ENCODE measurements at regions of chr7 and their contacts with region 1.

Region 1: DNA sequence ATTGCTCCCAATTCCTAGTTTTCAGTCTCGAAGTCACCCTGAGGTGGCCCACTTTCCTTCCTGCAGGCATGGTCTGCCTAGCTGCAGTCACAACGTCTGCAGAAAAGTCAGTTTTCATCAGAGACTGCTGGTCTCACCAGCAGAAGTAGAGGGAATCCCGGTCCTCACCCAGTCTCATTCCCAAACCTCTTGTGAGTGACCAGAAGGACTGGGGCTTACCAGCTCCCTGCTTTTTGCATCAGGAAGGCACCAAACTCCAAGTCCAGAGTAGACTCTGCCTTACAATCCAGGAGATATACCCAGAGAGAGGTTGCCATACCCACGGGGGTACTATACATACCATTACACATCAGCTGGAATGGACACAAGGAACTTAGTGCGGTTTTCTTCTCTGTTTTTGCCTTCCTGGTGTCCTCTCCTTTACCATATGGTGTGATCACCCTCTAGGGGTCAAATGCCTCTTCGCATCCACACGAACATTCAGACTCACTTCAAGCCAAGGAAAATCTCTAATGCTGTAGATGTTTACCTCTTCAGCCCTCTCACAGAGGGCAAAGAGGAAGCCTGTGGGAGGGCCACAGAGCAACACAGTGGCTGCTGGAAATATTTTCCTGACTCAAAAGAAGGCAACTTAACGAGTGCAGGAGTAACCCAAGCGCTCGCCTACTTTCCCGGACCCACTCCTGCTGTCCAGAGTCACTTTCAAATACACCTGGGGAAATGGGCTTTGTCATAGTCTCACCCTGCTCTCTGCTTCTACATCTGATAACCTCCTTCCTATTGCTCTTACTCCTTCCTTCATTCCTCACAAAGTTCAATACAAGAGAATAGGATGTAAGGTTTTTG is 220.9 kb downstream of the C7orf25 start:
- DNase-seq: peak; percentile 57
- H3K4me3 ChIP-seq: no peak overlapping the region
- H3K27ac ChIP-seq: no peak overlapping the region
- H3K4me1 ChIP-seq: no peaks in the 10 kb centered on the region
- H3K27me3 ChIP-seq: no peaks in the 10 kb centered on the region
- CTCF ChIP-seq: peak; percentile 83 to 84

Region 2: DNA sequence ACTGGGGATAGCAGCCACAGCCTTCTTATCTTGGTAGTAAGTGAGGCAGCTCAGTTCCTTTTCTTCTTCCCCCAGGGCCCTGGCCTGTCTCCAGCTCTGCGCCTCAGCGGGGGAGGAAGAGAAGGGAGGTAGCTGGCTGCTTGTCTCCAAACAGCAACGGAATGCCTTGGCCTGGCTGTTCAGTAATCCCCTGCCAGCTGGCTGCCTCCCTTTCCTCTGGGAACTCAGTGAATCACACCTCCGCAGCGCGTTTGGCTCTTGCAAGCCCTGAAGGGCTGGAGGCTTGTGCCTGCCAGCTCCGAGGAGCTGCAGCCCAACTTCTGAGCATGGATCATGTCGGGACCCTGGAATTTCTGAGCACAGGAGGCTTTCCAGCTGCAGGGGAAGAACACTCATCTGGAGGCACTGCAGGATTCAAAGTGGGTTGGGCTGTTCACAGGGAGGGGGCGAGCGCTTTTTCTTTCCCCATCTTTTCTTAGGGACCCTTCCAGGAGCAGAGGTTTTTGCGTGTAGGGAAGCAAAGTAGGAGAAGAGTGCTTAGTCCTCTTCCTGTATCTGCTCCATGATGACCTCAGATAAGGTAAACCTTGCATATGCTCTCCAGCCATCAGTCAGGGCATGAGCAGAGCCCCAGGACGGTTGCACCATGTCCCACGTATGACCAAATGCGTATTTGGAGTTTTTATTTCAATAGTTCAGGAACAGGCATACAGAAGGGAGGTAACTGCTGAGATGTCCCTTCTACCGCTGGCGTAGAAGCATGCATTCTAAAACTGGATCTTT is 734.9 kb before region 1 on chr7:
- CTCF ChIA-PET with region 1: no interaction called
- dilution Hi-C with region 1: no loop called
- in situ Hi-C with region 1: loop called in 1 of 2 experiments (anchors 5 kb)
- intact Hi-C with region 1: no loop called
- DNase-seq: peak; percentile 95
- H3K4me3 ChIP-seq: no peak overlapping the region
- H3K27ac ChIP-seq: no peak overlapping the region
- H3K4me1 ChIP-seq: peaks cover 16% of the 10 kb centered on the region
- H3K27me3 ChIP-seq: no peaks in the 10 kb centered on the region
- CTCF ChIP-seq: no peak

Region 3: DNA sequence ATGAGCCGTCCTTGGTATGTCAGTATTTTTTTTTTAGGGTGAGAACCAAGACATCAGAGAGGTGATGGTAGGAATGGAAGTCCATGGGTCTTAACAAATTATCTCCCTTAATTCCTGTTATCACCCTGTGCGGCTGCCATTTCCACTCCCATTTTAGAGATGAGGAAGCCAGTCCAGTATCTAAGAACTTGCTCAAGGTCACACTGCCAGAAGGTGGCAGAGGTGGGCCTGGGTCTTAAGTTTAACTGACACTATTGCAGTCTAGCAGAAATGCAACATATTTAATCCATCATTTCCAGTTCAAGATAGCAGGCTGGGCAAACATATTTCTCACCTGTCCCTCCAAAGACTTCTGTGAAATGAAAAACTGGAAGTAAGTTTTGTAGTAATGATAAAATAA is 562.3 kb before region 1 on chr7:
- CTCF ChIA-PET with region 1: no interaction called
- dilution Hi-C with region 1: no loop called
- in situ Hi-C with region 1: no loop called
- intact Hi-C with region 1: loop called (anchors 5 kb)
- DNase-seq: no peak
- H3K4me3 ChIP-seq: no peak overlapping the region
- H3K27ac ChIP-seq: no peak overlapping the region
- H3K4me1 ChIP-seq: peaks cover 4% of the 10 kb centered on the region
- H3K27me3 ChIP-seq: no peaks in the 10 kb centered on the region
- CTCF ChIP-seq: peak in 1 of 2 donors; percentile 42

Region 4: GRCh38 chr7:42262964-42263363 is 428.1 kb before region 1 on chr7:
- CTCF ChIA-PET with region 1: interaction called, 16 read pairs
- dilution Hi-C with region 1: no loop called
- in situ Hi-C with region 1: no loop called
- intact Hi-C with region 1: no loop called
- DNase-seq: peak; percentile 74
- H3K4me3 ChIP-seq: no peak overlapping the region
- H3K27ac ChIP-seq: peak overlapping the region; percentile 16
- H3K4me1 ChIP-seq: peaks cover 13% of the 10 kb centered on the region
- H3K27me3 ChIP-seq: no peaks in the 10 kb centered on the region
- CTCF ChIP-seq: no peak

Region 5: GRCh38 chr7:42421789-42422188 is 269.2 kb before region 1 on chr7:
- CTCF ChIA-PET with region 1: no interaction called
- dilution Hi-C with region 1: no loop called
- in situ Hi-C with region 1: no loop called
- intact Hi-C with region 1: no loop called
- DNase-seq: no peak
- H3K4me3 ChIP-seq: no peak overlapping the region
- H3K27ac ChIP-seq: no peak overlapping the region
- H3K4me1 ChIP-seq: no peaks in the 10 kb centered on the region
- H3K27me3 ChIP-seq: no peaks in the 10 kb centered on the region
- CTCF ChIP-seq: no peak

Region 6: DNA sequence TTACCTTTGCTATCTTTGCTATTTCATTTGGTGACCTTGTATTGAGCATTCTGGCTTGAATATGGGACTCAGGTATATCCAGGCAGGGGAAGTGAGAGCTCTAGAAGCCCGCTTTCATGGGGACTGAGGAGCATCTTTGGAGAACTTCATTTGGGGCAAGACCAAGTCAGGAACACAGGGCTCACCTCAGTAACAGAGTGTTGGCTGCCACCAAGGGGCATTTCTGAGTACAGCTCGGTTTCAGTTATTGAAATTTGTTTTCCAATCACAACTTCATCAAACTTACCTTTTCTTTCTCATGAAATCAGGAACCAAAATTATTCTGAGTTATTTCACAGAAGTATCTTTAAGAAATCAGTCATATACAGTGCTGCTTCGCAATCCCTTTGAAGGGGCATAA is 116.3 kb before region 1 on chr7:
- CTCF ChIA-PET with region 1: interaction called, 3 read pairs
- dilution Hi-C with region 1: no loop called
- in situ Hi-C with region 1: no loop called
- intact Hi-C with region 1: loop called (anchors 1 kb)
- DNase-seq: no peak
- H3K4me3 ChIP-seq: no peak overlapping the region
- H3K27ac ChIP-seq: no peak overlapping the region
- H3K4me1 ChIP-seq: peaks cover 3% of the 10 kb centered on the region
- H3K27me3 ChIP-seq: no peaks in the 10 kb centered on the region
- CTCF ChIP-seq: peak; percentile 53 to 64

Region 7: GRCh38 chr7:42650171-42650570 is 40.8 kb before region 1 on chr7:
- CTCF ChIA-PET with region 1: no interaction called
- dilution Hi-C with region 1: no loop called
- in situ Hi-C with region 1: no loop called
- intact Hi-C with region 1: no loop called
- DNase-seq: no peak
- H3K4me3 ChIP-seq: no peak overlapping the region
- H3K27ac ChIP-seq: no peak overlapping the region
- H3K4me1 ChIP-seq: no peaks in the 10 kb centered on the region
- H3K27me3 ChIP-seq: no peaks in the 10 kb centered on the region
- CTCF ChIP-seq: no peak

Region 8: GRCh38 chr7:43033369-43033768 is 342.4 kb after region 1 on chr7:
- CTCF ChIA-PET with region 1: no interaction called
- dilution Hi-C with region 1: no loop called
- in situ Hi-C with region 1: no loop called
- intact Hi-C with region 1: no loop called
- DNase-seq: no peak
- H3K4me3 ChIP-seq: no peak overlapping the region
- H3K27ac ChIP-seq: no peak overlapping the region
- H3K4me1 ChIP-seq: no peaks in the 10 kb centered on the region
- H3K27me3 ChIP-seq: no peaks in the 10 kb centered on the region
- CTCF ChIP-seq: no peak

Measured in mammary epithelial cell (primary cell).